ENCODE measurements at regions of chr10 and their contacts with region 1.

Region 1: GRCh38 chr10:102225646-102226541 is at the start of gene ELOVL3:
- DNase-seq: peak; percentile 53
- ATAC-seq: peak; percentile 86
- H3K4me3 ChIP-seq: peak within 1 kb of the TSS; percentile 54; the same call in 1 of the 2 replicates
- H3K27ac ChIP-seq: no peak within 1 kb of the TSS
- H3K4me1 ChIP-seq: peaks cover 11% of the 10 kb centered on the region
- H3K27me3 ChIP-seq: peaks cover 5 to 7% of the 10 kb centered on the region in 2 experiments
- CTCF ChIP-seq: no peak
- EP300 ChIP-seq: no peak
- POLR2A ChIP-seq: no peak
- RAD21 ChIP-seq: no peak
- polyA plus RNA-seq, gene ELOVL3: not detected

Region 2: GRCh38 chr10:101716851-101717659 is 508.8 kb before region 1 on chr10:
- CTCF ChIA-PET with region 1: no interaction called
- POLR2A ChIA-PET with region 1: no interaction called
- RAD21 ChIA-PET with region 1: no interaction called
- SMC1A ChIA-PET with region 1: no interaction called
- in situ Hi-C with region 1: no loop called
- intact Hi-C with region 1: no loop called
- DNase-seq: no peak
- ATAC-seq: peak; percentile 27
- H3K4me3 ChIP-seq: no peak overlapping the region
- H3K27ac ChIP-seq: no peak overlapping the region
- H3K4me1 ChIP-seq: no peaks in the 10 kb centered on the region
- H3K27me3 ChIP-seq: no peaks in the 10 kb centered on the region
- CTCF ChIP-seq: no peak
- EP300 ChIP-seq: no peak
- POLR2A ChIP-seq: no peak
- RAD21 ChIP-seq: no peak

Region 3: GRCh38 chr10:102167861-102168260 is 58.0 kb before region 1 on chr10:
- CTCF ChIA-PET with region 1: interaction called, 100 read pairs
- POLR2A ChIA-PET with region 1: interaction called, 5 read pairs
- RAD21 ChIA-PET with region 1: interaction called, 75 read pairs
- SMC1A ChIA-PET with region 1: interaction called, 39 read pairs
- in situ Hi-C with region 1: no loop called
- intact Hi-C with region 1: loop called (anchors 2 kb)
- DNase-seq: no peak
- ATAC-seq: no peak
- H3K4me3 ChIP-seq: no peak overlapping the region
- H3K27ac ChIP-seq: no peak overlapping the region
- H3K4me1 ChIP-seq: peaks cover 4% of the 10 kb centered on the region
- H3K27me3 ChIP-seq: no peaks in the 10 kb centered on the region
- CTCF ChIP-seq: no peak
- EP300 ChIP-seq: no peak
- POLR2A ChIP-seq: no peak
- RAD21 ChIP-seq: no peak

Region 4: DNA sequence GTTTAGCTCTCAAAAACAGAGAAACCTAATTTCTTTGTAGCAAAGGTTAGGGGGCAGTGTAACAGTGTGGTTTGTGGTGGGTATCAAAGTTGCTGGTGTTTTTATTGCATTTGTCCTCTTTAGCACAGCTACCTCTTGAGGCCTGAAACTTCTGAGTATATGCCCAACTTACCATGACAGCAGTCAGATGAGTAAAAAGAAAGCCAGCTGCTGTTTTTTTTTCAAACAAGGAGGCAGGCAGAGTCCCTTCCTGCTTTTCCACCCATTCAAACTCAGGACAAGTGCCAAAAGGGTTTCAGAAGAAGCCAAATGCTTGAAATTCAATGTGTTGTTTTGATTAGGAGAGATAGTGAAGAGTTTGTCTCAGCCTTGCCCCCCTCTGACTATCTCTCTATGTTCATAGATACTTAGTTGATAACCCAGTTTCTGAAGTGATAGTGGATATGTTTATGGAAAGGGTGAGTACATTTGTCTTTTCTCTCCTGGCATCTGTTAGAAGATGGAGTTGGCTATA is 42.5 kb after region 1 on chr10:
- CTCF ChIA-PET with region 1: interaction called, 6 read pairs
- POLR2A ChIA-PET with region 1: no interaction called
- RAD21 ChIA-PET with region 1: no interaction called
- SMC1A ChIA-PET with region 1: interaction called, 12 read pairs
- in situ Hi-C with region 1: no loop called
- intact Hi-C with region 1: no loop called
- DNase-seq: no peak
- ATAC-seq: peak; percentile 56; the same call in 1 of the 3 replicates
- H3K4me3 ChIP-seq: no peak overlapping the region
- H3K27ac ChIP-seq: no peak overlapping the region
- H3K4me1 ChIP-seq: no peaks in the 10 kb centered on the region
- H3K27me3 ChIP-seq: no peaks in the 10 kb centered on the region
- CTCF ChIP-seq: 0 out of 6 replicates have a peak, but pooled peaks of 1 of the 3 experiments have one; percentile 11
- EP300 ChIP-seq: no peak
- POLR2A ChIP-seq: no peak
- RAD21 ChIP-seq: no peak

Region 5: DNA sequence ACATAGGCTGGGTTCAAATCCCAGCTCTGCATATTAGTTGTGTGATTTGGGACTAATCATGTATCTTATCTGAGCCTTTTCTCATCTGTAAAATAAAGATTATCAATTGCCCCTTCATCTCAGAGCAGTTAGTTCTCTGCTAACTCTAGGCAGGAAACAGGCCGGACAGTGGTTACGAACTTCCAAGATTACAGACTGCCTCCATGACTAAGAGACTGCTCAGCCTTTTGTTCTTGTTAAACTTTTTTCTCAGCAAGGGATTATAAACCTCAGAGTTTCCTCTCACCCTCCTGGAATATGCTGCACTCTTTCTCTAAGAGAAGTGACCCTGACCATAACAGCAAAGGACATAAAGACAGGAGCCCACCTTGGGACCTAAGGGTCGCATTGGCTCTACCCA is 117.1 kb after region 1 on chr10:
- CTCF ChIA-PET with region 1: interaction called, 632 read pairs
- POLR2A ChIA-PET with region 1: interaction called, 4 read pairs
- RAD21 ChIA-PET with region 1: interaction called, 27 read pairs
- SMC1A ChIA-PET with region 1: interaction called, 231 read pairs
- in situ Hi-C with region 1: no loop called
- intact Hi-C with region 1: no loop called
- DNase-seq: no peak
- ATAC-seq: no peak
- H3K4me3 ChIP-seq: no peak overlapping the region
- H3K27ac ChIP-seq: no peak overlapping the region
- H3K4me1 ChIP-seq: no peaks in the 10 kb centered on the region; the same call in 1 of the 2 replicates
- H3K27me3 ChIP-seq: no peaks in the 10 kb centered on the region
- CTCF ChIP-seq: no peak
- EP300 ChIP-seq: no peak
- POLR2A ChIP-seq: no peak
- RAD21 ChIP-seq: no peak

Region 6: DNA sequence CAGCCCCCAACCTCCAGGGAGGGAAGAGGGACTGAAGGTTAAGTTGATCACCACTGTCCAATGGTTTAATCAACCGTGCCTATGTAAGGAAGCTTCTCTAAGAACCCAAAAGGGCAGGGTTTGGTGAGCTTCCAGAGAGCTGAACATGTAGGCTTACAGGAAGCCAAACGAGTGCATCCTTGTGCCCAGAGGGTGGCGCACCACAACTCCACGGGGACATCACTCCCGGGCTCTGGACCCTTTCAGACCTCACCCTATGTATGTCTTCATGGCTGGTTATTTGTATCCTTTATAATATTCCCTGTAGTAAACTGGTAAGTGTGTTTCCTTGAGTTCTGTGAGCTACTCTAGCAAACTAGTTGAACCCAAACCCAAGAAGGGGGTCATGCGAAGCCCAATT is 158.2 kb after region 1 on chr10:
- CTCF ChIA-PET with region 1: interaction called, 13 read pairs
- POLR2A ChIA-PET with region 1: no interaction called
- RAD21 ChIA-PET with region 1: interaction called, 14 read pairs
- SMC1A ChIA-PET with region 1: interaction called, 5 read pairs
- in situ Hi-C with region 1: no loop called
- intact Hi-C with region 1: no loop called
- DNase-seq: no peak
- ATAC-seq: peak; percentile 59
- H3K4me3 ChIP-seq: no peak overlapping the region
- H3K27ac ChIP-seq: no peak overlapping the region
- H3K4me1 ChIP-seq: peaks cover 13% of the 10 kb centered on the region
- H3K27me3 ChIP-seq: no peaks in the 10 kb centered on the region
- CTCF ChIP-seq: peak in 1 of 3 experiments; percentile 26; a peak in 3 of 6 replicates
- EP300 ChIP-seq: no peak
- POLR2A ChIP-seq: no peak
- RAD21 ChIP-seq: no peak

Region 7: GRCh38 chr10:102408728-102409603 is 183.1 kb after region 1 on chr10:
- CTCF ChIA-PET with region 1: interaction called, 69 read pairs
- POLR2A ChIA-PET with region 1: no interaction called
- RAD21 ChIA-PET with region 1: interaction called, 3 read pairs
- SMC1A ChIA-PET with region 1: interaction called, 3 read pairs
- in situ Hi-C with region 1: loop called (anchors 5 kb)
- intact Hi-C with region 1: no loop called
- DNase-seq: no peak
- ATAC-seq: 0 out of 3 replicates have a peak, but pooled peaks have one; percentile 8
- H3K4me3 ChIP-seq: peak overlapping the region; percentile 22; the same call in 1 of the 2 replicates
- H3K27ac ChIP-seq: no peak overlapping the region
- H3K4me1 ChIP-seq: peaks cover 9% of the 10 kb centered on the region
- H3K27me3 ChIP-seq: peaks cover 17 to 21% of the 10 kb centered on the region in 2 experiments
- CTCF ChIP-seq: no peak
- EP300 ChIP-seq: no peak
- POLR2A ChIP-seq: peak; percentile 50; the same call in 1 of the 2 replicates
- RAD21 ChIP-seq: no peak

Region 8: GRCh38 chr10:102503281-102504220 is 277.7 kb after region 1 on chr10 and contains the start of gene SUFU:
- CTCF ChIA-PET with region 1: interaction called, 11 read pairs
- POLR2A ChIA-PET with region 1: no interaction called
- RAD21 ChIA-PET with region 1: interaction called, 6 read pairs
- SMC1A ChIA-PET with region 1: interaction called, 5 read pairs
- in situ Hi-C with region 1: no loop called
- intact Hi-C with region 1: no loop called
- DNase-seq: peak; percentile 93
- ATAC-seq: peak; percentile 82
- H3K4me3 ChIP-seq: peak within 1 kb of the TSS; percentile 88
- H3K27ac ChIP-seq: peak within 1 kb of the TSS; percentile 72; the same call in 1 of the 2 replicates
- H3K4me1 ChIP-seq: peaks cover 7% of the 10 kb centered on the region
- H3K27me3 ChIP-seq: no peaks in the 10 kb centered on the region
- CTCF ChIP-seq: peak; percentile 82 to 98 (median 89); a peak in 5 of 6 replicates
- EP300 ChIP-seq: no peak
- POLR2A ChIP-seq: peak; percentile 92
- RAD21 ChIP-seq: peak; percentile 88
- polyA plus RNA-seq, gene SUFU: 0.68 to 0.84 TPM

Measured in GM12878 (cell line).